MCF 10A (cell line): ENCODE measurements at regions of chr5 and their contacts with region 1.

Region 1: GRCh38 chr5:112492291-112492690 is 73.2 kb upstream of the EPB41L4A start:
- DNase-seq: peak; percentile 79
- H3K4me3 Mint-ChIP-seq: no peak overlapping the region
- H3K27ac Mint-ChIP-seq: no peak overlapping the region
- H3K4me1 Mint-ChIP-seq: no peaks in the 10 kb centered on the region
- H3K27me3 Mint-ChIP-seq: no peaks in the 10 kb centered on the region
- CTCF ChIP-seq: peak; percentile 50

Region 2: GRCh38 chr5:112210430-112211005 is 281.8 kb before region 1 on chr5:
- CTCF ChIA-PET with region 1: interaction called, 4 read pairs
- POLR2A ChIA-PET with region 1: no interaction called
- intact Hi-C with region 1: loop called (anchors 1 kb)
- DNase-seq: peak; percentile 63
- H3K4me3 Mint-ChIP-seq: no peak overlapping the region
- H3K27ac Mint-ChIP-seq: no peak overlapping the region
- H3K4me1 Mint-ChIP-seq: peaks cover 6% of the 10 kb centered on the region
- H3K27me3 Mint-ChIP-seq: no peaks in the 10 kb centered on the region
- CTCF ChIP-seq: peak; percentile 69

Region 3: GRCh38 chr5:112434641-112435040 is 57.6 kb before region 1 on chr5:
- CTCF ChIA-PET with region 1: interaction called, 10 read pairs
- POLR2A ChIA-PET with region 1: no interaction called
- intact Hi-C with region 1: no loop called
- DNase-seq: peak; percentile 25
- H3K4me3 Mint-ChIP-seq: no peak overlapping the region
- H3K27ac Mint-ChIP-seq: no peak overlapping the region
- H3K4me1 Mint-ChIP-seq: peaks cover 7% of the 10 kb centered on the region
- H3K27me3 Mint-ChIP-seq: peaks cover 17% of the 10 kb centered on the region
- CTCF ChIP-seq: no peak

Region 4: DNA sequence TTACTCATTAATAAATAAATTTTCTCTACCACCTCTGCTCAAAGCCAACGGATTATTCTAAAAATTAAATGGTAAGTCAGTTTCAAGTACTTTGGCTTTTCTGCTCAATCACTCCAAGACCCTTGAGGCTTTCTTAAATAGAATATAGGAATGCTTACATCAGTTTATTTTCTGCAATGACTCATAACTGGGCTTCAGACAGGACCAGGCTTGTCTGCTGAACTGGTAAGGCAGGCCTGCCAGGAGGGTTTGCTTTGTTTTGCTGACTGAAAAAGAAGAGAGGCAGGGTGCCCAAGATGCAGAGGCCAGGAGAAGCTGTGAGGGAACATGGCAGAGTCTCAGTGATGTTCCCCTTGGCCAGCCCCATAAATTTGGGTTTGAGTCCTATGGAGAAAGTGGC is 12.9 kb before region 1 on chr5:
- CTCF ChIA-PET with region 1: interaction called, 44 read pairs
- POLR2A ChIA-PET with region 1: interaction called, 6 read pairs
- intact Hi-C with region 1: no loop called
- DNase-seq: peak; percentile 75
- H3K4me3 Mint-ChIP-seq: no peak overlapping the region
- H3K27ac Mint-ChIP-seq: peak overlapping the region; percentile 47
- H3K4me1 Mint-ChIP-seq: peaks cover 11% of the 10 kb centered on the region
- H3K27me3 Mint-ChIP-seq: no peaks in the 10 kb centered on the region
- CTCF ChIP-seq: no peak